ENCODE measurements at regions of chr22 and their contacts with region 1.

Region 1: GRCh38 chr22:20495861-20496681 is 476 bp upstream of the KLHL22 start:
- DNase-seq: peak; percentile 93
- H3K4me3 Mint-ChIP-seq: peak overlapping the region; percentile 88
- H3K27ac Mint-ChIP-seq: peak overlapping the region; percentile 88
- H3K4me1 Mint-ChIP-seq: peaks cover 19% of the 10 kb centered on the region
- H3K27me3 Mint-ChIP-seq: no peaks in the 10 kb centered on the region

Region 2: DNA sequence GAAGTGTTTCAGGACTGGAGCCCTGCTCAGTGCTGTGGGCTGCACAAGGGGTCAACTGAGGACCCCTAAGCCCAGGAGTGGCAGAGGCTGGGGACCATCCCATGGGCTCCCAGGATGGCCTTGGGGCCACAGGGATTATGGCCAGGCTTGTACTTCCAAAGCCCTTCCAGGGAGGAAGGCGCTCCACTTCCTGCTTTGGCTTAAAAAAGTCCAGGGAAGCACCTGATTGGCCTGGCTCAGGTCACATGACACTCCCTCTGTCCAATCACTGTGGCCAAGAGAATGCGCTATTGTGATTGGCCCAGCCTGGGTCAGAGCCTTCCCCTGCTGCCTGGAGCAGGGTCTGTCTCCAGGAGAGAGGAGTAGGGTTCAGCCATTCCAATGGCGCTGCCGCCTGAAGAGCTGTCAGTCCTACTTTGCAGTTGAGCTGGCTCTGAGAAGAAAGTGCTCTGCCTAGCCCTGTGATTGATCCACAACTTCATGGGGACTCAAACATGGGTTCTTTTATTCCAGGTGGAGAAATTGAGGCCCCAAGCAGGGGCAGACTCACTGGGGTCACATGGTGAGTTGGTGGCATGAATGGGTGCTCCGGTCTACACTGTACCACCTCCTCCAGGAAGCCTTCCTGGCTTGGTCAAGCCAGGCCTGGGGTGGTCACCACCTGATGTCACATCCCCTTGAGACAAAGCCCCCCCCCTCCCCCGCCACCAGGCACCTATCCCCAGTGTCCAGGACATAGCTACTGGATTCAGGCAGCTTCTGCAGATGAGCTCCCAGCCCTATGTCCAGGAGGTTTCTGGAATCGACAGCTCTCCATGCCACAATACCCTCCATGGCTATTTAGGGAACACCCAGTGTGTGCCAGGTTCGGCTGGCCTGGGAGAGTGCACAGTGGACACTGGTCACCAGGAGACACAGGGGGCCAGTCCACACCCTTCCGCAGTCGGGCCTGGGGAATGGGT is 276.1 kb before region 1 on chr22:
- intact Hi-C with region 1: no loop called
- DNase-seq: no peak
- H3K4me3 Mint-ChIP-seq: no peak overlapping the region
- H3K27ac Mint-ChIP-seq: no peak overlapping the region
- H3K4me1 Mint-ChIP-seq: no peaks in the 10 kb centered on the region
- H3K27me3 Mint-ChIP-seq: no peaks in the 10 kb centered on the region

Region 3: DNA sequence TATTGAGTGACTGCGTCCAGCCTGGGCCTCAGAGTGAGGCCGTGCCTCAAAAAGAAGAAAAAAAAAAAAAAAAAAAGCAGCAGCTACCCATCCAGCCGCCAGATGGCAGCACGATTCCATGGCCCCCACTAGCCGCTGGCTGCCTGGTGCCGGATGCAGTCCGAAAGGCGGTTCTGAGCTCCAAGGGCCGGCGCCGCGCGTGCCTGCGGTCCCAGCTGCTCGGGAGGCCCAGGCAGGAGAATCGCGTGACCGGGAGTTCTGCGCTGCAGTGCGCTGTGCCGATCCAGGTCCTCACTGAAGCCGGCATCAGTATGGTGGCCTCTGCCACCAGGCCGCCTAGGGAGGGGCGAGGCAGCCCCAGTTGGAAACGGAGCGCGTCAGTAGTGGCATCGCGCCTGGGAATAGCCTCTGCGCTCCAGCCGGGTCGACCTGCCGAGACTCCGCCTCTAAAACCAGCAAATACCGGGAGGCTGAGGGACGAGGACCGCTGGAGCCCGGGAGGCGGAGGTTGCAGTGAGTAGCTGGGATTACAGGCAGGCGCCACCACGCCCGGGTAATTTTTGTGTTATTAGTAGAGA is 77.8 kb before region 1 on chr22:
- intact Hi-C with region 1: loop called (anchors 2 kb)
- DNase-seq: peak; percentile 70
- H3K4me3 Mint-ChIP-seq: no peak overlapping the region
- H3K27ac Mint-ChIP-seq: no peak overlapping the region
- H3K4me1 Mint-ChIP-seq: no peaks in the 10 kb centered on the region
- H3K27me3 Mint-ChIP-seq: peaks cover 9% of the 10 kb centered on the region

Region 4: DNA sequence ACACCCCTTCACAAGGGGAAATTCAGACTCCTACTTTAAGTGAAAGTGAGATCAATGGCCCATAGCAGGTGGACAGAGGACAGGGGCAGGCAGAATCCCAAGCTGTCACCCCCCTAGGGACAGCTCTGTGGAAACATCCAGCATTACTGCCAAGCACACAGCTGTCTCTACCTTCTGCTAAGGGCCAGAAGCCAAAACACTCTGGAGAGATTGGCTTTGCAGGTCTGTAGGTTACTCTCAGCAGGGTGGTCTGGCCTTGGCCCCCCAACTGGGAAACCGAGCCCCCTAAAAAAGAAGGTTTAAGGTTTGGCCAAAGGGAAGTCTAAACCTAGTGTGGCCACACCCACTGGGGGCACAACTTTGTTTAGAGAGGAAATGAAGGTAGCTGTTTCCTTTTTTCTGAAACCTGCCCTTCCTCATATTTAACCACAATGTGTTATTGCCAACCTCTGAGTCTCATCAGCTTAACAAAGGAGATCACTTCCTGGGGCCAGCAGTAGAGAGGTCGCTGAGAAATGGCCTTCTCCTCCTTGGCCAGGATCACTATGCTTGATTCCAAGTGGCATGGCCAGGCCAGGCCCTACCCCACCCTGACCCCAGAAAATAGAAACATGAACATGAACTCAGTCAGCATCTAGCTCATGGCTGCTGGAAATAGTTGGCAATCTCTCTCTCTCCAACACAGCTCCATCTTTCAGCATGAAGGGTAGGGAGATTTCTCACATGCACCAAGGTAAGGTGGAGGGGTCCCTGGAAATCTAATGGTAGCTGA is 32.6 kb before region 1 on chr22:
- intact Hi-C with region 1: loop called (anchors 5 kb)
- DNase-seq: peak; percentile 29
- H3K4me3 Mint-ChIP-seq: peak overlapping the region; percentile 52
- H3K27ac Mint-ChIP-seq: peak overlapping the region; percentile 95
- H3K4me1 Mint-ChIP-seq: peaks cover 43% of the 10 kb centered on the region
- H3K27me3 Mint-ChIP-seq: no peaks in the 10 kb centered on the region

Region 5: GRCh38 chr22:20475115-20475436 is 21.0 kb before region 1 on chr22:
- intact Hi-C with region 1: loop called (anchors 1 kb)
- DNase-seq: no peak
- H3K4me3 Mint-ChIP-seq: peak overlapping the region; percentile 44
- H3K27ac Mint-ChIP-seq: peak overlapping the region; percentile 88
- H3K4me1 Mint-ChIP-seq: peaks cover 37% of the 10 kb centered on the region
- H3K27me3 Mint-ChIP-seq: no peaks in the 10 kb centered on the region

Region 6: DNA sequence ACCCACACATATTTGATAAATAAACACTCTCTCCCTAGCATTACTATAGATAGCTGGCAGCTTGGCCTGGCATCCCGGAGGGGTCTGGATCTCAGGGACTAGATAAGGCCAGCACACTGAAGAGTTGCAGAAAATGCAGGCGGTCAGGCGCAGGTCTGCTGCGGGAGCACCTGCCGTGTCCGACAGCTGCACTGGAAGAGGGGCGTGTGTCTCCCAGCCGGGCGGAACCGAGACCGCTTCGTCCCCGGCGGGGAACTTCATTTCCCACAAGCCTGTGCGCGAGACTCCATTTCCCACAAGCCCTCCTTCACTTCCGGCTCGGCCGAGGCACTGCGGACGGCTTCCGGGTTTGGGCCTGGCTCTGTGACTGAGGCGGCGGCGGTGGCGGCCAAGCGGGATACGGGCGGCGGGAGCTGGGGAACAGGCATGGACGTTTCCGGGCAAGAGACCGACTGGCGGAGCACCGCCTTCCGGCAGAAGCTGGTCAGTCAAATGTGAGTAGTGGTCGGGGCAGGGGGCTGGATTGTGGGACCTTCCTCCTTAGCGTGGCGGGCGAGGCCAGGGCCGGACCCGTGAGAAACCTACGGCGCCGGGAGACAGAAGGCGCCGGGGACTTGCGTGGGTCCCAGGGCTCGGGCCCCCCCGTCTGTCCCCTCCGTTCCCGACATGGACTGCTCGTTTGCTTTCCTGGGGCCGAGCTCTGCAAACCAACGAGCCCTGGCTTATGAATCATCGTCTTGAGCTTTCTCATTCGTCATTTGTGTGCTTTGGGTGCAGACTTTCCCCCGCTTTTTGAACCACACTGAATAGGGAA is 11.4 kb after region 1 on chr22 and contains the start of gene MED15:
- intact Hi-C with region 1: loop called (anchors 1 kb)
- DNase-seq: peak; percentile 86
- H3K4me3 Mint-ChIP-seq: peak within 1 kb of the TSS; percentile 96
- H3K27ac Mint-ChIP-seq: peak within 1 kb of the TSS; percentile 91
- H3K4me1 Mint-ChIP-seq: peaks cover 49% of the 10 kb centered on the region
- H3K27me3 Mint-ChIP-seq: no peaks in the 10 kb centered on the region
- total RNA-seq, gene MED15: 123 and 129 TPM in 2 replicates

Measured in activated T-helper 2 cell treated with anti-CD3 and anti-CD28 coated beads, Interferon-gamma antibody, Interleukin-2, Interleukin-4, amounts not matched to agents 10 μg/mL and 5 μg/mL and 100 μg/mL, durations not matched to agents 14 hours and 24 hours and 36 hours (primary cell).